H1 (cell line): ENCODE measurements at regions of chr5 and their contacts with region 1.

Region 1: DNA sequence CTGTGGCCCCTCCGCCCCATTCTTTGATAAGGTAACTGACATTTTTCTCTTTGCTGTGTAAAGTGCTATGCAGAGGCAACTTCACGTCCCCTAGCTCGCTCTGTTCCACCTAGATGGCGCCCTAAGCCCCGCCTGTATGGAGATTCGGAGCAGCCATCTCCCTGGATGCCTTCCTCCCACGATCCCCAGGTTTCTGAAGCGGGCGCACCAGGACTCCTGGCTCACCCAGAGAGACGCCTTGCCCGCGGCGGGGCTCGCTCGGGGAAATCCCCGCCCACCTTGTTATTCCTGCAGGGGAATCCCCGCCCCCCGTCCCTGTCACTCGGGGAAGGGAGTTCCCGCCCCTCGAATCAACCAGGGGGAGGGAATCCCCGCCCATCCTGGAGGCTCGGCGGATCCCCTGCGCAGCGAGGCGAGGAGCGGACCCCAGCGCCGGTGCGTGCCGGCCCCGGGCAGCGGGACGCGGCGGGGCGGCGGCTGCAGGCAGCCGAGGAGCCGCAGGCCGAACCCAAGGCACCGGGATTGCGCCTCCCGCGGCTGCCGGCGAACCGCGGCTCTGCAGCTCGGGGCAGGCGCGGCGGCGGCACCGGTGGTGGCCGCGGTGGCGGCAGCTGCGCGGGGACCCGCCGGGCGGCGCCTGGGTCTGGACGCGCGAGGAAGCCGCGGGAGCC is at the start of gene PDZD2:
- DNase-seq: peak; percentile 39 to 86
- H3K4me3 ChIP-seq: peak within 1 kb of the TSS; percentile 53 to 82 (median 65)
- H3K27ac ChIP-seq: no peak within 1 kb of the TSS
- H3K4me1 ChIP-seq: peaks cover 0 to 14% (median 5%) of the 10 kb centered on the region in 4 experiments; a peak in 4 of 7 replicates
- H3K27me3 ChIP-seq: peaks cover 2 to 22% (median 15%) of the 10 kb centered on the region in 4 experiments; a peak in 6 of 7 replicates
- CTCF ChIP-seq: peak; percentile 41 to 58 (median 53); a peak in 3 of 4 replicates
- EP300 ChIP-seq: no peak
- POLR2A ChIP-seq: no peak
- RAD21 ChIP-seq: peak in 1 of 2 experiments; percentile 51; a peak in 2 of 4 replicates
- total RNA-seq, gene PDZD2: 6.8 and 8.5 TPM in 2 replicates

Region 2: GRCh38 chr5:31408814-31409213 is 230.1 kb before region 1 on chr5:
- CTCF ChIA-PET with region 1: no interaction called
- POLR2A ChIA-PET with region 1: no interaction called
- DNase-seq: no peak
- H3K4me3 ChIP-seq: no peak overlapping the region
- H3K27ac ChIP-seq: no peak overlapping the region
- H3K4me1 ChIP-seq: no peaks in the 10 kb centered on the region
- H3K27me3 ChIP-seq: no peaks in the 10 kb centered on the region
- CTCF ChIP-seq: no peak
- EP300 ChIP-seq: no peak
- POLR2A ChIP-seq: no peak
- RAD21 ChIP-seq: no peak

Region 3: GRCh38 chr5:31651241-31651640 is 12.4 kb after region 1 on chr5:
- CTCF ChIA-PET with region 1: interaction called, 12 read pairs
- POLR2A ChIA-PET with region 1: no interaction called
- DNase-seq: no peak
- H3K4me3 ChIP-seq: no peak overlapping the region
- H3K27ac ChIP-seq: no peak overlapping the region
- H3K4me1 ChIP-seq: peaks cover 0 to 5% (median 2%) of the 10 kb centered on the region in 4 experiments; a peak in 3 of 7 replicates
- H3K27me3 ChIP-seq: no peaks in the 10 kb centered on the region
- CTCF ChIP-seq: no peak
- EP300 ChIP-seq: no peak
- POLR2A ChIP-seq: no peak
- RAD21 ChIP-seq: no peak

Region 4: GRCh38 chr5:31664566-31664965 is 25.7 kb after region 1 on chr5:
- CTCF ChIA-PET with region 1: interaction called, 20 read pairs
- POLR2A ChIA-PET with region 1: no interaction called
- DNase-seq: peak; percentile 60 to 75
- H3K4me3 ChIP-seq: no peak overlapping the region
- H3K27ac ChIP-seq: no peak overlapping the region
- H3K4me1 ChIP-seq: no peaks in the 10 kb centered on the region
- H3K27me3 ChIP-seq: no peaks in the 10 kb centered on the region
- CTCF ChIP-seq: peak; percentile 87 to 97 (median 94)
- EP300 ChIP-seq: no peak
- POLR2A ChIP-seq: no peak
- RAD21 ChIP-seq: peak; percentile 80 to 85

Region 5: DNA sequence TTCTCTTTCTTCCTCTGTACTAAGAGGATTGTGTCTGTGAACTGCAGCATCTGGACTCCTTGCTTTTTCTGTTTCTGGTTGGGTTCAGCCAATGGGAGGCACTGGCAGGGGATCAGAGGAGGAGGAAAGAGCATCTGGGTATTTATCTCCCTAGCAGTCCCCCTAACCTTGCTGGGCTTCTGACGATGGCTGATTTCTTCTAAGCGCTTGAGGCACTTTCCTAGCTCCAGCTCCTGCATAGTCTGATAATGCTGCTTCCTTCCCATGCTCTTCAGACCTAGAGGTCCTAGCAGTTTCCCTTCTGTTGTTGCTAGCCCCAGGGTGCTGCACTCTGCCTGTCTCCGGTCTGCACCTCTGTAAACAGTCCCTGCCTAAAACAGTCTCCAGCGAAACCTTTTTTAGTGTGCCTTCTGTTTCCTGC is 225.1 kb after region 1 on chr5:
- CTCF ChIA-PET with region 1: no interaction called
- POLR2A ChIA-PET with region 1: no interaction called
- DNase-seq: no peak
- H3K4me3 ChIP-seq: no peak overlapping the region
- H3K27ac ChIP-seq: no peak overlapping the region
- H3K4me1 ChIP-seq: peaks cover 0 to 4% (median 3%) of the 10 kb centered on the region in 4 experiments; a peak in 3 of 7 replicates
- H3K27me3 ChIP-seq: no peaks in the 10 kb centered on the region
- CTCF ChIP-seq: no peak
- EP300 ChIP-seq: no peak
- POLR2A ChIP-seq: no peak
- RAD21 ChIP-seq: no peak